HCT116 (cell line): ENCODE measurements at regions of chr4 and their contacts with region 1.

Region 1: GRCh38 chr4:139099366-139099982 is 77.5 kb downstream of the ELF2 start:
- DNase-seq: peak; percentile 84
- ATAC-seq: peak; percentile 94
- H3K4me3 ChIP-seq: no peak overlapping the region
- H3K27ac ChIP-seq: no peak overlapping the region
- H3K4me1 ChIP-seq: no peaks in the 10 kb centered on the region
- H3K27me3 ChIP-seq: no peaks in the 10 kb centered on the region
- CTCF ChIP-seq: peak; percentile 80 to 88 (median 86)
- POLR2A ChIP-seq: no peak
- RAD21 ChIP-seq: peak; percentile 92

Region 2: GRCh38 chr4:139167774-139168444 is 68.4 kb after region 1 on chr4:
- CTCF ChIA-PET with region 1: interaction called, 8 read pairs
- POLR2A ChIA-PET with region 1: no interaction called
- RAD21 ChIA-PET with region 1: no interaction called
- intact Hi-C with region 1: loop called (anchors 2 kb)
- DNase-seq: peak; percentile 35
- ATAC-seq: peak; percentile 80
- H3K4me3 ChIP-seq: no peak overlapping the region
- H3K27ac ChIP-seq: no peak overlapping the region
- H3K4me1 ChIP-seq: peaks cover 3 to 11% of the 10 kb centered on the region in 2 experiments; a peak in 3 of 4 replicates
- H3K27me3 ChIP-seq: no peaks in the 10 kb centered on the region
- CTCF ChIP-seq: peak; percentile 25 to 60 (median 55); a peak in 5 of 6 replicates
- POLR2A ChIP-seq: no peak
- RAD21 ChIP-seq: peak; percentile 54

Region 3: DNA sequence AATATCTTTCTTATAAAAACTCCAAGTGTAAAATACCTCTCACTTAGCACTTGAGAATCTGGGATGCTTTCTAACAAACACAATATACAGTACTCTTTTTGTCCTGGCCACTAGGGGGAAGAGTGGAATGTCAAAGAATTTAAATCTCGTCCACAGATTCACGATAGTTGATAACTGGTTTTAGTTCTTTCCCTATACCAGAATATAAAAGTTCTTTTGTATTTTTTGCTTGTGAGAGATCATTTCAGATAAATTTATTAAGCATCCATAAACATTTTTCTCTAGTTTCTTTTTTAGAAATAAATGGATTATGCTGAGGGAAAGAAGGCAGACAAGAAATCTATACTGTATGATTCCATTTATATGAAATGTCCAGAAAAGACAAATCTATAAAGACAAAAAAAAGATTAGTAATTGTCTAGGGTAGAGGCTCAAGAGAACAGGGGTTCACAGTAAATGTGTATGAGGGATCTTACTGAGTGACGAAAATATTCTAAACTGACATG is 130.1 kb after region 1 on chr4:
- CTCF ChIA-PET with region 1: interaction called, 3 read pairs
- POLR2A ChIA-PET with region 1: no interaction called
- RAD21 ChIA-PET with region 1: no interaction called
- intact Hi-C with region 1: loop called (anchors 1 kb)
- DNase-seq: peak; percentile 50
- ATAC-seq: peak; percentile 81
- H3K4me3 ChIP-seq: no peak overlapping the region; a peak in 1 of 4 replicates
- H3K27ac ChIP-seq: no peak overlapping the region
- H3K4me1 ChIP-seq: peaks cover 2 to 9% of the 10 kb centered on the region in 2 experiments; a peak in 3 of 4 replicates
- H3K27me3 ChIP-seq: no peaks in the 10 kb centered on the region
- CTCF ChIP-seq: peak; percentile 67 to 71 (median 69); a peak in 5 of 6 replicates
- POLR2A ChIP-seq: no peak
- RAD21 ChIP-seq: peak; percentile 71

Region 4: DNA sequence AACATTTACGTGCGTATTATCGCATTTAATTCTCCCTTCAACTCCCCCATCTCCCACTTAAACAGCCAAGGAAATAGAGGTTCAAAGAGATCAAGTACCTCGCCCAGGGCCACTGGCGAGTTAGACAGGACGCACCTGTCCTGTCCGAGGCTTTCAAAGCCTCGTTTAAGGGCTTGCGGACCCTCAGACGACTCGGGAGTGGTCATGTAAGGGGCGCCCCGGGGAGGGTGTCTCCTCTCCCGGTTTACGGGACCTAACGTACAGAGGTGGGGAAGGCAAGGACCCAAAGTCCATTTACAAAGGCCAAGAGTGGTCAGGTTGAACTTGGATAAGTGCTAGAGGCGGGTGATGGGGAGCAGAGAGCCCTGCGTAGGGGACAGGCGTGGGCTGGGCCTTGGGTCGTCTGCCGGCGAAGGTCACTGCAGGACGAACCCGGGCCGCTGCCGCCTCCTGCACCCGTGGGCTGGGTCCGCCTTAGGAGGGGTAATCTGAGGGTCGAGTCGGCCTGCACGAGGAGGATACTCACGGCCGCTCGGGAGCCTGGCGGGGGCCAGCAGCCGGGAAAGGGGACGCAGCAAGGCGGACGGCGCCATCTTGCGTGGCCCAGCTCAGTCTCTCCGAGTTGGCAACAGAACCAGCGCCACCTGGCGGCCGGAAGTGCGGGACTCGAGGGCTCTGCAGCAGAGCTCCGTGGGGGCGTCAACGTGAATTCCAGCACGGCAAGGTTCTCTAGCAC is 195.9 kb after region 1 on chr4:
- CTCF ChIA-PET with region 1: interaction called, 5 read pairs
- POLR2A ChIA-PET with region 1: interaction called, 3 read pairs
- RAD21 ChIA-PET with region 1: interaction called in 1 of 2 experiments, 3 read pairs
- intact Hi-C with region 1: loop called (anchors 2 kb)
- DNase-seq: peak; percentile 82
- ATAC-seq: peak; percentile 95
- H3K4me3 ChIP-seq: peak overlapping the region; percentile 89 to 99
- H3K27ac ChIP-seq: peak overlapping the region; percentile 71
- H3K4me1 ChIP-seq: peaks cover 13 to 28% of the 10 kb centered on the region in 2 experiments
- H3K27me3 ChIP-seq: no peaks in the 10 kb centered on the region
- CTCF ChIP-seq: peak in 2 of 3 experiments; percentile 82 to 91; a peak in 4 of 6 replicates
- POLR2A ChIP-seq: peak; percentile 75
- RAD21 ChIP-seq: no peak

Region 5: GRCh38 chr4:139530833-139531427 is 431.5 kb after region 1 on chr4:
- CTCF ChIA-PET with region 1: no interaction called
- POLR2A ChIA-PET with region 1: no interaction called
- RAD21 ChIA-PET with region 1: no interaction called
- intact Hi-C with region 1: loop called (anchors 10 kb)
- DNase-seq: peak; percentile 13
- ATAC-seq: peak; percentile 98
- H3K4me3 ChIP-seq: no peak overlapping the region
- H3K27ac ChIP-seq: no peak overlapping the region
- H3K4me1 ChIP-seq: no peaks in the 10 kb centered on the region; a peak in 1 of 4 replicates
- H3K27me3 ChIP-seq: no peaks in the 10 kb centered on the region
- CTCF ChIP-seq: peak; percentile 70 to 72 (median 71); a peak in 5 of 6 replicates
- POLR2A ChIP-seq: no peak
- RAD21 ChIP-seq: peak; percentile 54